ENCODE measurements at regions of chr1 and their contacts with region 1.

Region 1: DNA sequence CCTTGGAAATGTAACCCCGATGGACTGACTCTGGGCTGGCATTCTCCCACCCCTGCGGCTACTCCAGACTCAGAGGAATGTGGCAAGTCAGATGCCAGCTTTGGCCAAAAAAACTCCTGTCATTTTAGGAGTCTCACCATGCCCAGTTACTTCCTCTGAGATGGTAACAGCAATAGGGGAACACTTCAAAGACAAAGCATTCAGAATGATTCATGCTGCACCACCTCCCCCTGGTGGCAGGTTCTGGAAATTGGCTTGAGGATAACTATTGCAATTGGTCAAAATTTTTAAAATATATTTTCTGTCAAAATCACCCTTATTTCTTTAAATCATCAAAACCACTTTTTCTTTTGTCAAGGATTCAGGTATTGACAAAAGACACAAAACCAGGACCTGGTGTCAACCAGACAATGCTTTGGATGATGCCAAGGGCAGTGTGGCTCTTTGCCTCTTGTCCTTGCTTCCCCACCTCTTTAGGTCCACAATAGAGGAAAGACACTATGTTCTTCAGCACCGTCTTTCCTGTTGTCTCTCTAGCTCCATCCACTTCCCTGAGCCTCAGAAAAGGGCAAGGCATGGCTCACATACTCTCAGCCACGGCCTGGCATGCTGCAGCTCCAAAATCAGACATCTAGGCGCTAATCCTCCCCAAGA is 9.9 kb upstream of the CDCA8 start:
- DNase-seq: peak; percentile 59
- ATAC-seq: peak; percentile 96
- H3K4me3 Mint-ChIP-seq: no peak overlapping the region
- H3K27ac Mint-ChIP-seq: peak overlapping the region; percentile 77
- H3K4me1 Mint-ChIP-seq: peaks cover 6% of the 10 kb centered on the region
- H3K27me3 Mint-ChIP-seq: no peaks in the 10 kb centered on the region
- CTCF ChIP-seq: peak; percentile 91

Region 2: GRCh38 chr1:37449936-37450335 is 232.5 kb before region 1 on chr1:
- CTCF ChIA-PET with region 1: interaction called, 11 read pairs
- POLR2A ChIA-PET with region 1: no interaction called
- intact Hi-C with region 1: loop called (anchors 1 kb)
- DNase-seq: no peak
- ATAC-seq: peak; percentile 63
- H3K4me3 Mint-ChIP-seq: no peak overlapping the region
- H3K27ac Mint-ChIP-seq: no peak overlapping the region
- H3K4me1 Mint-ChIP-seq: peaks cover 10% of the 10 kb centered on the region
- H3K27me3 Mint-ChIP-seq: peaks cover 8% of the 10 kb centered on the region
- CTCF ChIP-seq: no peak

Region 3: DNA sequence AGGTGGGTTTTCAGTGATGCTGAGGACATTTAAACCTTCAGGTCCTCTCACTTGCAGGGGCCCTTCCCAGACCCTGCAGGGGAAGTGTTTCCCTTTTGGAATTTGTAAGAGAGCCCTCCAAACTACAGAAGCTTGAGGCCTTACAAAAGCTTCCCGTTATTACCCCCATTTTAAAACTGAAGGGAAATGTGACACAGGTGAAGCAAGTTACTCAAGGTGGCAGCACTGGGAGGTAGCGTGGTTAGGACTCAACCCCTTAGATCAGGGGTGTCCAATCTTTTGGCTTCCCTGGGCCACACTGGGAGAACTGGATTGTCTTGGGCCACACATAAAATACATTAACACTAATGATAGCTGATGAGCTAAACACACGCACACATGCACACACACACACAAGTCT is 223.9 kb before region 1 on chr1:
- CTCF ChIA-PET with region 1: interaction called, 11 read pairs
- POLR2A ChIA-PET with region 1: no interaction called
- intact Hi-C with region 1: loop called (anchors 1 kb)
- DNase-seq: no peak
- ATAC-seq: no peak
- H3K4me3 Mint-ChIP-seq: no peak overlapping the region
- H3K27ac Mint-ChIP-seq: no peak overlapping the region
- H3K4me1 Mint-ChIP-seq: peaks cover 5% of the 10 kb centered on the region
- H3K27me3 Mint-ChIP-seq: no peaks in the 10 kb centered on the region
- CTCF ChIP-seq: no peak

Region 4: DNA sequence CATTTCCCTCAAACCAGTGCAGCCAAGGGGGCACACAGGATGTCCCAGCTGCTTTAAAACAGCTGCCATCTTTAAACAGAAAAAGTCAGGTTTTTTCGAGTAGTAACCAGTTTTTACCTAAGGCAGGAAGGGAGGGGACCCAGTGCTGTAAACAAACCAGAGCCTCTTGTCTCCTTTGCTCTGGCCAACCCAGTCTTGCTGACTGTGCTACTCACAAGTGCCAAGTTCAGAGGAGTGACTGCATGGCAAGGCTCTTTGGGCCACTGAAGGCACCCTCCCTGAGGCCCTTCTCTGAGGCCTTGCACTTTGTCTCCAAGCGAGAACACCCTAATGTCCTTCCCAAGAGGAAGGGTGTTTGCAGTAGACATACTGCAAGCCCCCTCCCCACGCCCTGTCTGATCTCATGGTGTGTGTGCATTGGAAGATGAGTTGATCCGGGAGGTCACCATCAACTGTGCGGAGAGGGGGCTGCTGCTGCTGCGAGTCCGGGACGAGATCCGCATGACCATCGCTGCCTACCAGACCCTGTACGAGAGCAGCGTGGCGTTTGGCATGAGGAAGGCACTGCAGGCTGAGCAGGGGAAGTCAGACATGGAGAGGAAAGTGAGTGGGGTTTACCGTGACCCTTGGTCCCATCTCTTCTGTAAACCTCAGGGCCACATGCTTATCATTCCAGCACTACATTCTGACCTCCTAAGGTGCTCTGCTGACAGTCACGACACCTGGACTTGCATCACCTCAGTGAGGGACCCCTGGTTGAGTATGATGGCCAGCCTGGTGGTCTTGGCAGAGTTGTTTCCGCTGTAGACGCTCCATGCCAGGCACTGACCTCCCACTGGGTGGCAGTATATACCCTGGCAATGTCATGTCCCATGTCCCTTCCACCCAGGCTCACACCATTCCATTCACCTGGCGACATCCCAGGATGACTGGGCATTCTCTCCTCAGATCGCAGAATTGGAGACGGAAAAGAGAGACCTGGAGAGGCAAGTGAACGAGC is 121.0 kb before region 1 on chr1:
- CTCF ChIA-PET with region 1: interaction called, 3 read pairs
- POLR2A ChIA-PET with region 1: no interaction called
- intact Hi-C with region 1: loop called (anchors 1 kb)
- DNase-seq: no peak
- ATAC-seq: peak; percentile 34
- H3K4me3 Mint-ChIP-seq: no peak overlapping the region
- H3K27ac Mint-ChIP-seq: no peak overlapping the region
- H3K4me1 Mint-ChIP-seq: no peaks in the 10 kb centered on the region
- H3K27me3 Mint-ChIP-seq: peaks cover 7% of the 10 kb centered on the region
- CTCF ChIP-seq: no peak

Region 5: GRCh38 chr1:37721565-37721964 is 39.1 kb after region 1 on chr1:
- CTCF ChIA-PET with region 1: no interaction called
- POLR2A ChIA-PET with region 1: no interaction called
- intact Hi-C with region 1: no loop called
- DNase-seq: no peak
- ATAC-seq: no peak
- H3K4me3 Mint-ChIP-seq: no peak overlapping the region
- H3K27ac Mint-ChIP-seq: no peak overlapping the region
- H3K4me1 Mint-ChIP-seq: no peaks in the 10 kb centered on the region
- H3K27me3 Mint-ChIP-seq: peaks cover 3% of the 10 kb centered on the region
- CTCF ChIP-seq: no peak